ENCODE measurements at regions of chr14 and their contacts with region 1.

Region 1: DNA sequence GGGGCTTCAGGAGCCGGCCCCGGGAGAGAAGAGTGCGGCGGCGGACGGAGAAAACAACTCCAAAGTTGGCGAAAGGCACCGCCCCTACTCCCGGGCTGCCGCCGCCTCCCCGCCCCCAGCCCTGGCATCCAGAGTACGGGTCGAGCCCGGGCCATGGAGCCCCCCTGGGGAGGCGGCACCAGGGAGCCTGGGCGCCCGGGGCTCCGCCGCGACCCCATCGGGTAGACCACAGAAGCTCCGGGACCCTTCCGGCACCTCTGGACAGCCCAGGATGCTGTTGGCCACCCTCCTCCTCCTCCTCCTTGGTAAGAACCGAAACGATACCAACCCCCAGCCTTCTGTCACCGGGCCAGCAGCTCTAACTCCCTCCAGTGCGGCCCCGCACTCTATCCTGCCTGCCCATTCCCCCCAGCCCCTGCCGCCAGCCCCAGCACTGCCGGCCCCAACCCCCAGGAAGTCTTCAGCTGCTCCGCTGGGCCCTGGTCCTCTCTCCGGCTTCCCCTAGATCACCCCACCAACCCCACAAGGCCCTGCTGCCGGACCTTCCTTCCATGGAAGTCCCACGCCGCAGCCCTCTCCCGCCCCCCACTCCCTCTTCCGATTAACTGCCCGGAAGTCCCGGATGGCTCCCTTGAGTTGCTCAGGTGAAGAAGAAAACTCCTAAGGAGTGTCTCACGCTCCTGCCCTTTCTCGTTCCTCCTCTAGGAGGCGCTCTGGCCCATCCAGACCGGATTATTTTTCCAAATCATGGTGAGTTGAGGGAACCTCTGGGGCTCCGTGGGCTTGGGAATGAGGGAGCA is 693 bp downstream of the LRP10 start:
- DNase-seq: peak; percentile 82 to 86
- H3K4me3 ChIP-seq: peak overlapping the region; percentile 91
- H3K4me3 Mint-ChIP-seq: peak overlapping the region; percentile 82
- H3K27ac Mint-ChIP-seq: peak overlapping the region; percentile 92
- H3K4me1 ChIP-seq: peaks cover 9% of the 10 kb centered on the region; the same call in 1 of the 2 replicates
- H3K4me1 Mint-ChIP-seq: peaks cover 8% of the 10 kb centered on the region
- H3K27me3 ChIP-seq: no peaks in the 10 kb centered on the region
- H3K27me3 Mint-ChIP-seq: no peaks in the 10 kb centered on the region
- CTCF ChIP-seq: peak; percentile 86 to 89

Region 2: GRCh38 chr14:22900081-22900799 is 28.0 kb after region 1 on chr14:
- CTCF ChIA-PET with region 1: interaction called, 10 read pairs
- POLR2A ChIA-PET with region 1: interaction called, 3 read pairs
- intact Hi-C with region 1: loop called (anchors 1 kb)
- DNase-seq: peak; percentile 57 to 64
- H3K4me3 ChIP-seq: no peak overlapping the region
- H3K4me3 Mint-ChIP-seq: no peak overlapping the region
- H3K27ac Mint-ChIP-seq: no peak overlapping the region
- H3K4me1 ChIP-seq: 0 out of 2 replicates have a peak, but pooled peaks cover 7% of the 10 kb centered on the region
- H3K4me1 Mint-ChIP-seq: no peaks in the 10 kb centered on the region
- H3K27me3 ChIP-seq: no peaks in the 10 kb centered on the region
- H3K27me3 Mint-ChIP-seq: no peaks in the 10 kb centered on the region
- CTCF ChIP-seq: peak; percentile 46 to 70

Region 3: DNA sequence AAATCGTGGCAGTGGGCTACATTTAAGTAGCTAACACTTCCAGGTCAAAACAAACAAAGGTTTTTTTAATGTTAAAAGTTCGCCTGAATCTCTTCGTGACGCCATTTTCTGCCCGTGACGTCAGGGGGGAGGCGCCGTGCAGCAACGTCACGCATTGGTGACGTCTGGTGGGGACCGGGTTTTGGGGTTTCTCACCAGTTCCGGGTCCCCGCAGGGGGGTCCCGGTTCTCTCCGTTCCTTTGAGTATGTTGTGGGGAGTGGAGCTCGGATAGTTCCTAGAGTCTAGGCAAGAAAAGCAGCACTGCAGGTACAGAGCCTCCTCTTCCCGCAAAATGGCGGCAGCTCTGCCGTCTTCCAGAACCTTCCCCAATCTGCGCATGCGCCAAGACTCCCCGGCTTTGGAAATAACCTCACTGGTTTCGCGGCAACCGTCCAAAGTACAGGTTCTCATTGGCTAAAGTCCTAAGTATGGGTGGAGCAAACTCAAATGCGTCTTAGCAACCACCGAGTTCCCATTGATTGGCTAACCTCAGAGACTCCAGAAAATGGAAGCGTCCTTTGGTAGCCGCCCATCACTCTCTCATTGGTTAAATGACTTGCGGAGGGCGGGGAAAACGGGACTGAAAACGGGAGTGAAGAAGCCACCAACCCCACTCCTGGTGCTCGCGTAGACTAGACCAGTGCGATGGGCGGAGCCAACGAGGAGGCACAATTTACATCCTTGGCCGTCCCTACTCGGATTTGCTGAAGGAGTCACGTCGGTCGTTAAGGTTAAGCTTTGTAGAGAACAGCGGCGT is 46.8 kb after region 1 on chr14 and contains the start of gene RBM23:
- CTCF ChIA-PET with region 1: no interaction called
- POLR2A ChIA-PET with region 1: no interaction called
- intact Hi-C with region 1: loop called (anchors 5 kb)
- DNase-seq: peak; percentile 98
- H3K4me3 ChIP-seq: peak within 1 kb of the TSS; percentile 65
- H3K4me3 Mint-ChIP-seq: peak within 1 kb of the TSS; percentile 90
- H3K27ac Mint-ChIP-seq: peak within 1 kb of the TSS; percentile 100
- H3K4me1 ChIP-seq: peaks cover 8% of the 10 kb centered on the region
- H3K4me1 Mint-ChIP-seq: peaks cover 6% of the 10 kb centered on the region
- H3K27me3 ChIP-seq: no peaks in the 10 kb centered on the region
- H3K27me3 Mint-ChIP-seq: peaks cover 2% of the 10 kb centered on the region
- CTCF ChIP-seq: no peak
- total RNA-seq, gene RBM23: 67.0 and 70.0 TPM in 2 replicates

Region 4: GRCh38 chr14:23137192-23137829 is 265.1 kb after region 1 on chr14:
- CTCF ChIA-PET with region 1: no interaction called
- POLR2A ChIA-PET with region 1: no interaction called
- intact Hi-C with region 1: no loop called
- DNase-seq: no peak
- H3K4me3 ChIP-seq: no peak overlapping the region
- H3K4me3 Mint-ChIP-seq: no peak overlapping the region
- H3K27ac Mint-ChIP-seq: no peak overlapping the region
- H3K4me1 ChIP-seq: no peaks in the 10 kb centered on the region
- H3K4me1 Mint-ChIP-seq: no peaks in the 10 kb centered on the region
- H3K27me3 ChIP-seq: no peaks in the 10 kb centered on the region
- H3K27me3 Mint-ChIP-seq: no peaks in the 10 kb centered on the region
- CTCF ChIP-seq: no peak